Activated naive CD4-positive, alpha-beta T cell treated with anti-CD3 and anti-CD28 coated beads for 36 hours (primary cell): ENCODE measurements at regions of chr10 and their contacts with region 1.

Region 1: DNA sequence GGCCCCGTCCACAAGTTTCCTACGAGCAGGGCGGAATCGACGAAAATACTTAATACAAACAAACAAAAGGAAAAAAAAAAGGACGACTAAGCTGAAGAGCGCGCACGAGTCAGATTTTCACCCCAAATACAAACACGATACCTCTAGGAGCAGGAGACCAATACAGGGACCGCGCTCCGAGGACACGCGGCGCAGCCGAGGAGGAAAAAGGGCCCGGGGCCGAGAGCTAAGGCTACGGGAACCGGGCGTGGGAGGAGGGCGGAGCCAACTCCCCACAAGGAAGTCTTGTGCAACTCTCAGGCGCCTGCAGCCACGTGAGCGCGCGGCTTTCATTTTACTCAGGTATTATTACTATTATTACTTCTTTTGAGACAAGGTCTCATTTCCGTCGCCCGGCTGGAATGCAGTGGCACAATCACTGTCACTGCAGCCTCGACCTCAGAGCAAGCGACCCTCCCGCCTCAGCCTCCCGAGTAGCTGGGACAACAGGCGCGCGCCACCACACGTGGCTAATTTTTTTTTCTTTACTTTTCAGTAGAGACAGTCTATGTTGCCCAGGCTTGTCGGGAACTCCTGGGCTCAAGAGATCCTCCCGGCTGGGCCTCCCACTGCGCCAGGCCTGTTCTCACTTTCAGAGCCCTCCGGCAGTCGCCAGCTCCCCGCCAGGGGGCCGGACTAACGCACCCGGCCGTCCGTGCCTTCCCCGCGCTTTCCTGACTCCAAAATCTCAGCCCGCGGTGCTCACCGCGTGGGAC is 1.2 kb downstream of the HNRNPF start:
- DNase-seq: peak; percentile 94
- H3K4me3 Mint-ChIP-seq: peak overlapping the region; percentile 88
- H3K27ac Mint-ChIP-seq: peak overlapping the region; percentile 96
- H3K4me1 Mint-ChIP-seq: peaks cover 32% of the 10 kb centered on the region
- H3K27me3 Mint-ChIP-seq: no peaks in the 10 kb centered on the region

Region 2: GRCh38 chr10:43361986-43362839 is 45.5 kb before region 1 on chr10:
- CTCF ChIA-PET with region 1: interaction called, 6 read pairs
- intact Hi-C with region 1: loop called (anchors 1 kb)
- DNase-seq: peak; percentile 98
- H3K4me3 Mint-ChIP-seq: peak overlapping the region; percentile 95
- H3K27ac Mint-ChIP-seq: peak overlapping the region; percentile 96
- H3K4me1 Mint-ChIP-seq: peaks cover 23% of the 10 kb centered on the region
- H3K27me3 Mint-ChIP-seq: no peaks in the 10 kb centered on the region

Region 3: GRCh38 chr10:43420369-43421200 is 12.8 kb after region 1 on chr10:
- CTCF ChIA-PET with region 1: interaction called, 3 read pairs
- intact Hi-C with region 1: loop called (anchors 1 kb)
- DNase-seq: peak; percentile 78
- H3K4me3 Mint-ChIP-seq: peak overlapping the region; percentile 87
- H3K27ac Mint-ChIP-seq: peak overlapping the region; percentile 95
- H3K4me1 Mint-ChIP-seq: peaks cover 35% of the 10 kb centered on the region
- H3K27me3 Mint-ChIP-seq: no peaks in the 10 kb centered on the region